ENCODE measurements at regions of chr2 and their contacts with region 1.

Region 1: DNA sequence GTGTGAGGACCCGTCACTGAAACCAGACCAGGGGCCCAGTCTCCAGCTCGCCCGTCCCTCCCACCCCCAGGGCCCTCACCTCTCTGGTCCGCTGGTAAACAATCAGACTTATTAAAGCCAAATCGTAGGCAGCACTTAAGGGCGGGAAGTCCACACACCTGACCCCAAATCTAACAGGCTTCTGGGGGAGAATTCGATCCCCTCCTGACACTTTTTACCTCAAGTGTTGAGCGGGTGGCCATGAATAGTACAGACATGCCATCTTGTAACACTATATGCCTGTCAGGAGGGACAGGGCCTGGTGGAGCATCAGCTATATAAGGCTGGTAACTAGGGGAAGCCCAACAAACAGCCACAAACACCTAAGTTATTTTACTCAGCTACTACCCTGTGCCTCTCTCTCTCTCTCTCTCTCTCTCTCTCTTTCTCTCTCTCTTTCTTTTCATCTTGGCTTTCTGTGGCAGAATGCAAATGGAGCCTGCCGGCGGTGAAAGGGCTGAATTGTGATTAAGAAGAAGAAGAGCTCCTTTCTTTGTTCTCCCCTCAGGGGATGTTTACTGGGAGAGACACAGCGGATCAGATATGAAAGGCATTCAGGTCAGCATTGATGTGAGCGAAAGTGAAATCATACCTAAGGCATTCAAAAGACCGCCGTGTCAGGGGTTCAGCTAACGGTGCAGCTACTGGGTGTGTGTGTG is 9.5 kb downstream of the ZEB2 start:
- DNase-seq: peak; percentile 57
- ATAC-seq: peak; percentile 84
- H3K4me3 Mint-ChIP-seq: peak overlapping the region; percentile 68
- H3K27ac Mint-ChIP-seq: peak overlapping the region; percentile 81
- H3K4me1 Mint-ChIP-seq: peaks cover 57% of the 10 kb centered on the region
- H3K27me3 Mint-ChIP-seq: peaks cover 16% of the 10 kb centered on the region
- CTCF ChIP-seq: no peak

Region 2: GRCh38 chr2:144426981-144427479 is 83.4 kb before region 1 on chr2:
- CTCF ChIA-PET with region 1: no interaction called
- POLR2A ChIA-PET with region 1: no interaction called
- intact Hi-C with region 1: no loop called
- DNase-seq: no peak
- ATAC-seq: no peak
- H3K4me3 Mint-ChIP-seq: no peak overlapping the region
- H3K27ac Mint-ChIP-seq: no peak overlapping the region
- H3K4me1 Mint-ChIP-seq: peaks cover 26% of the 10 kb centered on the region
- H3K27me3 Mint-ChIP-seq: no peaks in the 10 kb centered on the region
- CTCF ChIP-seq: no peak

Region 3: GRCh38 chr2:144456680-144457079 is 53.8 kb before region 1 on chr2:
- CTCF ChIA-PET with region 1: no interaction called
- POLR2A ChIA-PET with region 1: no interaction called
- intact Hi-C with region 1: loop called (anchors 5 kb)
- DNase-seq: peak; percentile 22
- ATAC-seq: peak; percentile 28
- H3K4me3 Mint-ChIP-seq: no peak overlapping the region
- H3K27ac Mint-ChIP-seq: no peak overlapping the region
- H3K4me1 Mint-ChIP-seq: peaks cover 64% of the 10 kb centered on the region
- H3K27me3 Mint-ChIP-seq: peaks cover 1% of the 10 kb centered on the region
- CTCF ChIP-seq: no peak

Region 4: GRCh38 chr2:144529841-144530240 is 19.4 kb after region 1 on chr2:
- CTCF ChIA-PET with region 1: no interaction called
- POLR2A ChIA-PET with region 1: no interaction called
- intact Hi-C with region 1: no loop called
- DNase-seq: no peak
- ATAC-seq: no peak
- H3K4me3 Mint-ChIP-seq: no peak overlapping the region
- H3K27ac Mint-ChIP-seq: no peak overlapping the region
- H3K4me1 Mint-ChIP-seq: no peaks in the 10 kb centered on the region
- H3K27me3 Mint-ChIP-seq: peaks cover 25% of the 10 kb centered on the region
- CTCF ChIP-seq: no peak